PC-3 (cell line): ENCODE measurements at regions of chr12 and their contacts with region 1.

Region 1: DNA sequence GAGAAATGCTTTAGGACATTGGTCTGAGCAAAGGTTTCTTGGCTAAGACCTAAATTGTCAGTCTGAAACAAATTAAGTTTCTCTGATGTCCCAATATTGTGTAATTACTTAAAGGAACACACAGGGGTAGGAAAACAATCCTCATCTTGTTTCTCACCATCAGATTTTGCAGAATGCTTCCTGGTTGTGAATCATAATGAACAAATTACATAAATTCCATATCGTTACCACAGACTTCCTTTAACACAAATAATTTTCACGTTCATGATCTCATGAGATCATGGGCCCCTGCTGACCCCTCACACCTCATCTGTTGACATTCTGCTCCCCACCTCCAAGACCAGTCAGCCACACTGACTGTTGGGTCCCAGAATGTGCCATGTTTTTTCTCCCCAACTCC is 194.1 kb downstream of the MON2 start:
- DNase-seq: peak; percentile 75
- ATAC-seq: peak; percentile 81
- H3K4me3 ChIP-seq: no peak overlapping the region
- H3K27ac ChIP-seq: peak overlapping the region; percentile 54
- H3K4me1 ChIP-seq: peaks cover 15% of the 10 kb centered on the region
- H3K27me3 ChIP-seq: no peaks in the 10 kb centered on the region
- CTCF ChIP-seq: no peak

Region 2: GRCh38 chr12:62640910-62641448 is 19.8 kb before region 1 on chr12:
- CTCF ChIA-PET with region 1: no interaction called
- POLR2A ChIA-PET with region 1: no interaction called
- intact Hi-C with region 1: loop called (anchors 2 kb)
- DNase-seq: peak; percentile 27
- ATAC-seq: peak; percentile 67
- H3K4me3 ChIP-seq: no peak overlapping the region
- H3K27ac ChIP-seq: peak overlapping the region; percentile 68
- H3K4me1 ChIP-seq: peaks cover 16% of the 10 kb centered on the region
- H3K27me3 ChIP-seq: no peaks in the 10 kb centered on the region
- CTCF ChIP-seq: no peak

Region 3: GRCh38 chr12:62724947-62725447 is 64.2 kb after region 1 on chr12:
- CTCF ChIA-PET with region 1: no interaction called
- POLR2A ChIA-PET with region 1: no interaction called
- intact Hi-C with region 1: loop called (anchors 5 kb)
- DNase-seq: peak; percentile 98
- ATAC-seq: peak; percentile 92
- H3K4me3 ChIP-seq: peak overlapping the region; percentile 26; the same call in 1 of the 2 replicates
- H3K27ac ChIP-seq: peak overlapping the region; percentile 81
- H3K4me1 ChIP-seq: peaks cover 55% of the 10 kb centered on the region
- H3K27me3 ChIP-seq: no peaks in the 10 kb centered on the region
- CTCF ChIP-seq: no peak